ENCODE measurements at regions of chr11 and their contacts with region 1.

Region 1: GRCh38 chr11:44286268-44286880 is 23.6 kb downstream of the ALX4 start:
- DNase-seq: peak; percentile 66
- H3K4me3 ChIP-seq: no peak overlapping the region
- H3K27ac ChIP-seq: no peak overlapping the region
- H3K4me1 ChIP-seq: no peaks in the 10 kb centered on the region; the same call in 1 of the 2 replicates
- H3K27me3 ChIP-seq: peaks cover 14% of the 10 kb centered on the region; the same call in 1 of the 2 replicates

Region 2: GRCh38 chr11:44519989-44520737 is 233.8 kb after region 1 on chr11:
- in situ Hi-C with region 1: loop called (anchors 10 kb)
- DNase-seq: no peak
- H3K4me3 ChIP-seq: no peak overlapping the region
- H3K27ac ChIP-seq: no peak overlapping the region
- H3K4me1 ChIP-seq: no peaks in the 10 kb centered on the region
- H3K27me3 ChIP-seq: peaks cover 57% of the 10 kb centered on the region

Region 3: DNA sequence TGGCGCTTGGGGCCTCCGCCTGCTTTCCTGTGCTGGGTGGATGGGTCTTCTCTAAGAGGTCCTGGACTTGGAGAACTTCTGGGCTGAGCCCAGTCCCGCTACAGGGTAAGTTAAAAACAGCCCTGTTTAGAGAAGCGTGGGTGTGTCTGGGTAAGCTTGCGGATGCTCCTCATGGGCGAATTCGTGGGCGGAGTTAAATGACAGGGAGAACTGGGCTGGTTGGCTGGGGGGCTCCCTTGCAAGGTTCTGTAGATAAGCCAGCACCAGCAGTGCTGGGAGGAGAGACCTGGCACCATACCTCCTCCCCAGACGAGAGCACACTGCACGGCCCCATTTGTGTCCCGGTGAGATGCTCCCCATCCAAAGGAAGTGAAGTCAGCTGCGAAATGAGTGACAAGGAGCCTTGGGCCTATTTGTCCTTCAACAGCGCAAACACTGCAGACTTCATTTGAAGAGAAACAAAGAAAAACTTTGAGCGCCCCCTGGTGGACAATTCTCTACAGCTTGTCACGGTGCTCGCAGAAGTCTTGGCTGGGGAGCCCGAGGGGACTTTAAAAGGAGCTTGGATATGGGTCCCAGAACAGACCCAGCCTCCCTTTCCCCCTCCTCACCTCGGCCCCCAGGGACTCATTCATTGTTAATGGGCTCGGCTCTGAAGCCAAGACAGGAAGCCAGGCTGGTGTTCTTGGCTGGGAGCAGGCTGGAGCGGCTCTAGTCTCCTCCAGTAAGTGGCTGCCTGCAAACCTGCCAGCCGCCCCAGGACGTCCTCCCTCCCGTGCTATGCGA is 624.8 kb after region 1 on chr11:
- in situ Hi-C with region 1: loop called (anchors 25 kb)
- DNase-seq: peak; percentile 86
- H3K4me3 ChIP-seq: no peak overlapping the region
- H3K27ac ChIP-seq: no peak overlapping the region
- H3K4me1 ChIP-seq: no peaks in the 10 kb centered on the region
- H3K27me3 ChIP-seq: peaks cover 8% of the 10 kb centered on the region